ENCODE measurements at regions of chr15 and their contacts with region 1.

Region 1: DNA sequence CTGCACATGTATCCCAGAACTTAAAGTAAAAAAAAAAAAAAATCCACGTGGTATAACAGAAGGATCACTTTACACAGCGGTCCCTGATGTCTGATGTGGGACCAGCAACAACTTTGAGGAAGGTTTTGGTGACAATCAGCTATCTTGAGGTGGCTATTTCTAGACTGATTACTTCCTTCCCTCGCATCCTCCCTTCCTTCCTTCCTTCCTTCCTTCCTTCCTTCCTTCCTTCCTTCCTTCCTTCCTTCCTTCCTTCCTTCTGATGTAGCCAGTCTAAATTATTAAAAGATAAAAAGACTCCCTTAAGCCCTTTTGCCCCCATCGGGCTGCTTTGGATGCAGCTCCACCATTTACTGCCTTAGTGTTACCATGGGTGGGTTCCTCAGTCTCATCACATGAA is 14.9 kb downstream of the SORD start:
- DNase-seq: no peak
- H3K4me3 ChIP-seq: no peak overlapping the region
- H3K27ac ChIP-seq: no peak overlapping the region
- H3K4me1 ChIP-seq: no peaks in the 10 kb centered on the region
- H3K27me3 ChIP-seq: no peaks in the 10 kb centered on the region
- CTCF ChIP-seq: no peak

Region 2: DNA sequence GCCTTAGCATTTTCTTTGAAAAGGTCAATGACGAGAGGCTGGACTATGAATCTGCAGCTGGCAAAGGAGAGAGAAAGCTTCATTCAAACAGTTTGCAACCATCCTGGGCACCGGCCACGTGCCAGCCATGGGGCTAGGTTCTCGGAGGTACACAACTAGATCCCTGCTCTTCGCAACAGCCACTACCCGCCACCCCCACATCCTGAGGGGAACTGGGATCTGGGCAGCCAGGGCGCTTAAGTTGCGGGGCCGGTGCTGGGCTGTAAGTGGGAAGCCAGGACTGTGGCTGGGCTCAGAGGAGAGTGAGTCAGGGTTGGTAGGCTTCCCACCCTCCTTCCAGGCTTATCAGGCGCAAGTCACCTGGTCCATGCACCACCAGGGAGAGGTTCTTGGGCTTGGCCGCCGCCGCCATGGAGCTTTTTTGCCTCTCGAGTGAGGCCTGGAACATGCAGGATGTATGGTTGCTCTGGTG is 176.5 kb before region 1 on chr15:
- CTCF ChIA-PET with region 1: no interaction called
- dilution Hi-C with region 1: no loop called
- in situ Hi-C with region 1: no loop called
- intact Hi-C with region 1: no loop called
- DNase-seq: no peak
- H3K4me3 ChIP-seq: no peak overlapping the region
- H3K27ac ChIP-seq: no peak overlapping the region
- H3K4me1 ChIP-seq: no peaks in the 10 kb centered on the region
- H3K27me3 ChIP-seq: no peaks in the 10 kb centered on the region
- CTCF ChIP-seq: no peak

Region 3: DNA sequence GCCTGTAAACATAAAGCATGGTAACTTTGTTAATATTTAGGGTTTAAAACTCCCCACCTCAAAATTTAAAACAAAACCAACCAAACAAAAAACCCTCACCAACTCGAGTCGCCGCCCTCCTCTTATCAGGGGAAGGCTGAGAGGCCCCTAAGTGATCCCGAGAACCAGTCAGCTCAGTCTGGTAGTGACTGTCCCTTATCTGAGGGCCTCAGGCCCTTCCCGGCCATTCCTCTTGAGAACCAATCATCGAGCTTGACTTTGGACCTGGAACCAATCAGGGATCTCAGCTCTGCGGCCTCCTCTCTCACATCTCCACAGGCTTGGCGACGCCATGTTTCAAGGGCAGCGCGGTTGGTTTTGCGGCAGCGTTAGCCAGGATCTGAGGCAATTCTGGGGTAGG is 81.5 kb before region 1 on chr15 and contains the start of gene TERB2:
- CTCF ChIA-PET with region 1: no interaction called
- dilution Hi-C with region 1: loop called (anchors 5 kb)
- in situ Hi-C with region 1: no loop called
- intact Hi-C with region 1: no loop called
- DNase-seq: no peak
- H3K4me3 ChIP-seq: no peak within 1 kb of the TSS
- H3K27ac ChIP-seq: no peak within 1 kb of the TSS
- H3K4me1 ChIP-seq: no peaks in the 10 kb centered on the region
- H3K27me3 ChIP-seq: no peaks in the 10 kb centered on the region
- CTCF ChIP-seq: no peak
- total RNA-seq, gene TERB2: not detected

Region 4: DNA sequence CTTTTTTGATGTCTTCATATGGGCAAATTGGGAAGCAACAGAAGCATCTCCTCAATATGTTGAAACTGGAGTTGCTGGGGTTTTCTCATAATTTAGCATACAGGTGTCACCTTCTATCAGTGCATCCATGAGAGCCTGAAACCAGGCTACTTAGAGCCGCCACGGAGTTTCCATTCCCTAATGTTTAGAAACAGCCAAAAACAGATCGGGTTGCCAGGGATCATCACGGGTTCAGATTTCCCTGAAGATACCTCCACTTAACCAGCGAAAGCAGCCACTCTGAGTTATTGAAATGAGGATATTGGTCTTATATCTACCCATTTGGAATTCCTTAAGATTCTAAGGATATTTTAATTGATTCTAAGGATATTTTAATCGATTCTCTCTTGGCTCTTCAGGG is 66.9 kb before region 1 on chr15:
- CTCF ChIA-PET with region 1: interaction called, 15 read pairs
- dilution Hi-C with region 1: no loop called
- in situ Hi-C with region 1: loop called in 1 of 2 experiments (anchors 5 kb)
- intact Hi-C with region 1: loop called (anchors 2 kb)
- DNase-seq: no peak
- H3K4me3 ChIP-seq: no peak overlapping the region
- H3K27ac ChIP-seq: no peak overlapping the region
- H3K4me1 ChIP-seq: no peaks in the 10 kb centered on the region
- H3K27me3 ChIP-seq: no peaks in the 10 kb centered on the region
- CTCF ChIP-seq: no peak

Measured in mammary epithelial cell (primary cell).